Left lung (tissue), 14 donors: ENCODE measurements at regions of chr19 and their contacts with region 1.

Region 1: DNA sequence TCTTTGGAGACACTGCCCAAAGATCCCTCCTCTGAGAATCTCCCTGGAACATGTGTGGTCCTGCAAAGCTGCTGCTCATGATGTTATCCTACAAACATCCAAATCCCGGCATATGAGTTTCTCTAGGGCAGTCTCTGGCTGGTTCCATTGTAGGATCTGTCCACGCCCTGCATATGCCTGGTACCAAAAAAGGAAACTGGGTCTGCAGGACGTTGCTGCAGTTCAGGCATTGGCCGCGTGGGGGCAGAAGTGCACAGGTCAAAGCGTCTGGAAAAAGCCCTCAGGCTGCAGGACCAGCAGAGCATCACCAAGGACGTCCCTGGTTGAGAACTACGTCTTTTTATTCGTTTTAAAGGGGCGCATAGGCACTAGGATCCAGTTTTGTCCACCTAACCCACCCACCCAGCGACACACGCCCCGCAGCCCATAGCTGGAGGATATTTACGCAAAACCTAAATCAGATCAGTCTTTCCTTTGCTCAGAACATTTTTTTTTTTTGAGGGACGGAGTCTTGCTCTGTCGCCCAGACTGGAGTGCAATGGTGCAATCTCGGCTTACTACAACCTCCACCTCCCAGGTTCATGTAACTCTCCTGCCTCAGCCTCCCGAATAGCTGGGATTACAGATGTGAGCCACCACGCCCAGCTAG is 12.9 kb upstream of the ZNF564 start:
- DNase-seq: peak; percentile 68 to 97 (median 86)
- ATAC-seq: peak; percentile 100
- H3K4me3 ChIP-seq: no peak overlapping the region
- H3K27ac ChIP-seq: no peak overlapping the region
- H3K4me1 ChIP-seq: no peaks in the 10 kb centered on the region
- H3K27me3 ChIP-seq: no peaks in the 10 kb centered on the region
- CTCF ChIP-seq: peak; percentile 94 to 96

Region 2: GRCh38 chr19:12502149-12502548 is 62.0 kb before region 1 on chr19:
- intact Hi-C with region 1: no loop called
- DNase-seq: no peak
- ATAC-seq: no peak
- H3K4me3 ChIP-seq: no peak overlapping the region
- H3K27ac ChIP-seq: no peak overlapping the region
- H3K4me1 ChIP-seq: no peaks in the 10 kb centered on the region
- H3K27me3 ChIP-seq: no peaks in the 10 kb centered on the region
- CTCF ChIP-seq: no peak

Region 3: DNA sequence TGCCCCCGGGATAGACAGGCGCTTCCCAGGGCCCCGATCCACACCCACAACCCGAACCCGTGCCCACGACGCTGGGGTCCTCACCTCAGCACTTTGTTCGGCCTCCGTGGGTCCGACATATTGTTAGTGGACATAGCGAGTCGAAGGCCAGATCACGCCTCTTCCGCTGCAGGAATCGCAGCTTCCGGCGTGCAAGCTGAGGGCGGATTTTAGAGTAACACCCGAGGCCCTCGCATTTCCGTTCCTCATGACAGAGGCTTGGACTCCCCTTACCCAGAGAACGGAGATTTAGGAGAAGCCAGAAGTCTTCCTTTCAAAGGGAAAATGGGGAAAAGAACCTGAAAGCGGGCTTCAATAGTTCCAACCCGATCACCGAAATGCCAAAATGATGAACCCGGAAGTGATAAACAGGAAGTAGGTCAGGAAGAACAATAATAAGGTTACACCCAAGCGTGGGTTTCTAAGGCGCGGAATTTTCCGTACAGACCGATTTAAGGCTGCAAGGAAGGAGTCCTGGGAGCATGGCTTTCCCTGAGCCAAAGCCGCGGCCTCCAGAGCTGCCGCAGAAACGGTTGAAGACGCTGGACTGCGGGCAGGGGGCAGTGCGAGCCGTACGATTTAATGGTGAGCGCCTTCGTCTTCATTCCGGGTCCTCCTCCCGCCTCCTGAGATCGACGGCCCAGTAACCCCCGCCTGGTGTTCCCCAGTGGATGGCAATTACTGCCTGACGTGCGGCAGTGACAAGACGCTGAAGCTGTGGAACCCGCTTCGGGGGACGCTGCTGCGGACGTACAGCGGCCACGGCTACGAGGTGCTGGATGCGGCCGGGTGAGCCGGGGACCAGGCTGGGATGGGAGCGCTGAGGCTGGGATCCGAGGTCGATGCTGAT is 105.4 kb after region 1 on chr19:
- intact Hi-C with region 1: loop called in 1 of 2 experiments (anchors 10 kb)
- DNase-seq: peak; percentile 82 to 90 (median 87)
- ATAC-seq: peak; percentile 78
- H3K4me3 ChIP-seq: peak overlapping the region; percentile 79 to 91
- H3K27ac ChIP-seq: peak overlapping the region; percentile 94 to 96
- H3K4me1 ChIP-seq: peaks cover 22 to 56% of the 10 kb centered on the region in 2 donors
- H3K27me3 ChIP-seq: no peaks in the 10 kb centered on the region
- CTCF ChIP-seq: no peak